ENCODE measurements at regions of chr4 and their contacts with region 1.

Region 1: GRCh38 chr4:112214390-112215264 is 17.0 kb upstream of the AP1AR start:
- DNase-seq: peak; percentile 61
- H3K4me3 Mint-ChIP-seq: no peak overlapping the region
- H3K27ac Mint-ChIP-seq: peak overlapping the region; percentile 90
- H3K4me1 Mint-ChIP-seq: peaks cover 12% of the 10 kb centered on the region
- H3K27me3 Mint-ChIP-seq: no peaks in the 10 kb centered on the region
- CTCF ChIP-seq: peak; percentile 48

Region 2: DNA sequence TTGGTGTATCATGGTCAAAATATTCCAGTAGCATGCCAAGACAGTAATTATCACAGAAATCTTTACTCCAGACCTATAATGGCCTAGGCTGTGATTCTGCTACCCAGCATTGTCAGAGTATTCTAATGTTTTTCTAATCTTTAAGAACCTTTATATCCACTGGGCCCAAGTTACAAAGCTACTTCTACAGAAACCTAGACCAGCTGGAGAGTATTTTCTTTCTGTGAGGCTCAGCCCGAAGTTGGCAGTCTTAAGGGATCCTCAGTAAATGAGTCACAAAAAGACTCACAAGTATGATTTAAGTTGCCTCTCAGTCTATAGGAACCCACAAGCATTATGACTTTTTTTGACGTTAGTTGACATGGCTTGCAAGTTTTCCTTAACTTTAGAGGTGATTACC is 707.9 kb before region 1 on chr4:
- CTCF ChIA-PET with region 1: no interaction called
- POLR2A ChIA-PET with region 1: no interaction called
- intact Hi-C with region 1: no loop called
- DNase-seq: peak; percentile 15
- H3K4me3 Mint-ChIP-seq: no peak overlapping the region
- H3K27ac Mint-ChIP-seq: no peak overlapping the region
- H3K4me1 Mint-ChIP-seq: peaks cover 11% of the 10 kb centered on the region
- H3K27me3 Mint-ChIP-seq: no peaks in the 10 kb centered on the region
- CTCF ChIP-seq: no peak

Region 3: DNA sequence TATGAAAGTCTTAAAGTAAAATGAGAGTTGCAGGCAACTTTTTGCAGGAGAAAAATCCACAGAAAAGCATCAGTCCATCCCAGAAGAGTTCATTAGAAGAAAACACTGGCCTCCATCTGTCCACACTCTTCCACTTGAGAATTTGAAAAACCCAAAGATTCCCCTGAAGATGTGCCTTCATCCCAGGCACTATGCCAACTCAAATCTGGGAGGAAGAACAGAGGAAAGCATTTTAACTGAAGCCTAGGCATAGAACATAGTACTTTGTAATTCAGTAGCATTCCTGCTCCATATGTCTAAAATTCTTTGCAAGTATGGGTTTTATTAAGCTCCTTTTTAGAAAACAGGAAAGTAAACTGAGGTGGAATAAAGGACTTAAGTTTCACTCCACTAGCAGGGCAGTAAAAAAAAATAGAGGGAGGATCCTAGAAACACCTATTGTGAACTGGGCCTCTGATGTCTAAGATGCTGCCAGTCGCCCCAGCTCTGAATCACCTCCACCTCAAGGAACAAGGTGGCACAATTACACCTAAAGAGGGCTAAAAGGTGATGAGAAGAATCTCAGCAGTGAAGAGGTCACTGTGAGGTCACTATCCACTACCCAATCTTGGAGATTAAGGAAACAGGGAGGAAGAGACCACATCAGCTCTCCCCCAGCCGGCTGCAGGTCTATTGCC is 211.3 kb before region 1 on chr4:
- CTCF ChIA-PET with region 1: no interaction called
- POLR2A ChIA-PET with region 1: no interaction called
- intact Hi-C with region 1: no loop called
- DNase-seq: no peak
- H3K4me3 Mint-ChIP-seq: no peak overlapping the region
- H3K27ac Mint-ChIP-seq: no peak overlapping the region
- H3K4me1 Mint-ChIP-seq: no peaks in the 10 kb centered on the region
- H3K27me3 Mint-ChIP-seq: peaks cover 51% of the 10 kb centered on the region
- CTCF ChIP-seq: no peak

Region 4: DNA sequence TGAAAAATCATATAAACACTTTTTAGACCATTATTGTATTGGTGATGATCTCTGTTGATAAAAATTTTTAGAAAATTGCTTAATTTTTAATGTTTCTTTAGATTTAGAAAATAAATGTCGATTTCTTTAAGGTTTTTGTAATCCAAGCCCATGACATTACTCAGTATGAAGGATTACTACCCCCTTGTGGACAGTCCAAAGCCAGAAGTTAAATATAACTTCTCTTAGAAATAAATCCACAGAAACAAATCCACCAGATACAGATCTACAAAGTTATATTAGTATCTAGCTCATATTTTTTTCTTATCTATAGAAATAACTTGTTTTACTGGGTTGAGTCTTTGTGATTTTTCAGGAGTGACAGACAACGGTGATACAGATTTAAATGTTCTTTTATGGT is 52.2 kb after region 1 on chr4:
- CTCF ChIA-PET with region 1: no interaction called
- POLR2A ChIA-PET with region 1: interaction called, 3 read pairs
- intact Hi-C with region 1: loop called (anchors 1 kb)
- DNase-seq: peak; percentile 33
- H3K4me3 Mint-ChIP-seq: no peak overlapping the region
- H3K27ac Mint-ChIP-seq: no peak overlapping the region
- H3K4me1 Mint-ChIP-seq: peaks cover 14% of the 10 kb centered on the region
- H3K27me3 Mint-ChIP-seq: no peaks in the 10 kb centered on the region
- CTCF ChIP-seq: peak; percentile 31